ENCODE measurements at regions of chr22 and their contacts with region 1.

Region 1: DNA sequence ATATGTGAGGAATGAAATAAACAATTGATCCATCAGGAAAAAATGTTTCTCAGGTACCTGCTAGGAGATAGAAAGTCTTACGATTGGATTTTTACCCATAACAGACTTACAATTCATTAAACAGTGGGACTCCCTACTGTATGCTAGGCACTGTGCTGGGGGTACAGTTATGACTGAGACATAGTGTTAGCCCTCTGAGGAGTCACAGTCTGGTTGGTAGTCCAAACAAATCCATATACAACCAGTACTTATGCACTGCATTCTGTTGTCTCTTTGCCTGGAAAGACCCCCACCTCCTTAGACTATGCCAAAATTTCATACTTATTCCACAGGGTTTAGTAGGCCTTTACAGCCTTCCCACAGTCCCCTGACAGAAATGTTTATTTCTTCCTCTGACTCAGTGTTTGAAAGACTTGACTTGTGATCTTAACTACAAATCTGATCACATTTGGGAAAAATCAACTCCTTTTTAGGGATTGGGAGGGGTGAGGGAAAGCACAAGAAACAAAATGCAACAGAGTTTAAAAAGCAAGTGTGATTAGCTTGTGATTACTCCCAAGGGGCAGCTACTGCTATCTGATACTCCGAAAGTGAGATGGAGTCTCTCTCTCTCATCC is 69.4 kb upstream of the HORMAD2 start:
- DNase-seq: no peak
- H3K4me3 Mint-ChIP-seq: no peak overlapping the region
- H3K27ac Mint-ChIP-seq: no peak overlapping the region
- H3K4me1 Mint-ChIP-seq: no peaks in the 10 kb centered on the region
- H3K27me3 Mint-ChIP-seq: no peaks in the 10 kb centered on the region
- CTCF ChIP-seq: no peak

Region 2: DNA sequence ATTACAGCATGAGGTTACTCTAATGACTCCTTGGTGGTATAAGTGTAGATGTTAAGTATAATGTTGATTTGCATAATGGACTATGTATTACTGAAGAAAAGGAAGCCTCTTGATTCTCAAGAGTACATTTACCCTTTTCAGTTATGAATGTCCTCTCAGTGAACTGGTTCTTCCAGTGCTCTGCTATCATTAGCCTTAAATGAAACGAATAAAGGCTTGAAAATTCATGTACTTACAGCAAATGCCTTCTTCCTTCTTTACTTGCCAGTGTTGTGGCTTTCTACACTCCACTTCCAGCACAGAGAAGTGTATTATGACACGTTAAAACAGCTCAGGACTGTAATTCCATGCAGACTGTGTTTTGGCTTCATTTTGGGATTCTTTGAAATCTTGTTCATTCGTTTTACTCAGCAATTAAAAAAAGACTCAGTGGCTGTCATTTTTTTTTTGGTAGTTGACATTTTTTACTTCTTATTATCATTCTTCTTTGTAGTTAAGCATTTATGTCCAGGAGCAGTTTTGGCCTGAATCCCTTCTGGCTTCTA is 31.0 kb before region 1 on chr22:
- CTCF ChIA-PET with region 1: no interaction called
- intact Hi-C with region 1: loop called (anchors 1 kb)
- DNase-seq: no peak
- H3K4me3 Mint-ChIP-seq: no peak overlapping the region
- H3K27ac Mint-ChIP-seq: no peak overlapping the region
- H3K4me1 Mint-ChIP-seq: peaks cover 29% of the 10 kb centered on the region
- H3K27me3 Mint-ChIP-seq: no peaks in the 10 kb centered on the region
- CTCF ChIP-seq: no peak

Region 3: GRCh38 chr22:30196141-30196879 is 185.4 kb after region 1 on chr22:
- CTCF ChIA-PET with region 1: no interaction called
- intact Hi-C with region 1: no loop called
- DNase-seq: peak; percentile 97
- H3K4me3 Mint-ChIP-seq: peak overlapping the region; percentile 28
- H3K27ac Mint-ChIP-seq: peak overlapping the region; percentile 98
- H3K4me1 Mint-ChIP-seq: peaks cover 53% of the 10 kb centered on the region
- H3K27me3 Mint-ChIP-seq: no peaks in the 10 kb centered on the region
- CTCF ChIP-seq: no peak